Left lung (tissue), 14 donors: ENCODE measurements at regions of chr5 and their contacts with region 1.

Region 1: DNA sequence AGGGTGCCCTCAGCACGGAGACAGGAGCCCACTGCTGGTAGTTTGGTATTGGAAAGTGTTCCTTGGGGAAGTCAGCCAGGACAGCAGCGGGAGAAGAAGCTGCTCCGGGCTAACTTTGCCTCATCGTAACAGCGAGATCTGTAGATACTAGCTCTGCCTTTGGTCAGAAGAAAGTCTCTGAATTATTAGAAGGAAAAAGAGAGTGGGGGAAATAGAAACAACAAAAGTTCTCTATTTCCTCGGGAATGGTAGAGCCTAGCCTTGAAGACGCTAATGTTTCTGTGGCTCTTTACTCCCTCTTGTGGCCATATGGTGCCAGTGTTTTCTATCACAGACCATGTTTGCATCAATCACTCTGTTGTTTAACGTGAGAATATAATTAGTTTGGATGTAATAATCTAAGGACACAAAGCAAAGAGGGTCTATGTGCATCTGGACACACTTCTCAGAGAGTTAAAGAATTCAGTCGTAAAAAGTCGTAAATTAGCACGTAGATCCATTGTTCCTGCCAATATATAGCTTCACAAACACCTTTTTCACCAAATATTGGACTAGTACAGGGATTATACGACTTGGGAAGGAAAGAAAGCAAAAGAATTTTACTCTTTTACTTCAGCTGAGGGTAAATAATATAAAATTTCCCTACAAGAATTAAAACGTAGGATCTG is 40.2 kb upstream of the HSD17B4 start:
- DNase-seq: peak in 3 of 4 donors; percentile 59 to 83 (median 73)
- ATAC-seq: peak; percentile 98
- H3K4me3 ChIP-seq: peak overlapping the region; percentile 33 to 41
- H3K27ac ChIP-seq: peak overlapping the region; percentile 69 to 78
- H3K4me1 ChIP-seq: peaks cover 0 to 29% of the 10 kb centered on the region in 2 donors
- H3K27me3 ChIP-seq: no peaks in the 10 kb centered on the region
- CTCF ChIP-seq: peak; percentile 87 to 89

Region 2: GRCh38 chr5:118989816-118990215 is 422.3 kb before region 1 on chr5:
- intact Hi-C with region 1: loop called in 1 of 2 experiments (anchors 5 kb)
- DNase-seq: no peak
- ATAC-seq: no peak
- H3K4me3 ChIP-seq: no peak overlapping the region
- H3K27ac ChIP-seq: no peak overlapping the region
- H3K4me1 ChIP-seq: peaks cover 3 to 6% of the 10 kb centered on the region in 2 donors
- H3K27me3 ChIP-seq: no peaks in the 10 kb centered on the region
- CTCF ChIP-seq: no peak

Region 3: DNA sequence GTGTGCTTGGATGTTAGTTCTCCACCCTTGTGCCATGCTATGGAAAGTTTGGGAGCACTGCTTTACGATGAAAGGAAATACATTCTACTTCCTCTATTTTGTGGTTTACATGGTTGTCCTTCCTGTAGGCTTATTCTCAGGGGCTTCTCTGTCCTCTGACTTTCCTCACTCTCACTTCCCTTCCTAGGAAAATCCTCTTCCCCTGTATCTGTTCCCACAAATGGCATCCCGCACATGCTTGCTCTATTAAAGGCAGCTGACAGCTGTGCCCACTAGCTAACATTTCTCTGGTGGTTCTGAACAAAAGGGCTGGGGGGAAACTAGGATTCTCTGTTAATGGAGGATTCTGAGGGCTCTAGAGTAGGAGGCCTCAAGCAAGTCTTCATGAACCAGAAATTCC is 269.7 kb after region 1 on chr5:
- intact Hi-C with region 1: no loop called
- DNase-seq: no peak
- ATAC-seq: no peak
- H3K4me3 ChIP-seq: no peak overlapping the region
- H3K27ac ChIP-seq: no peak overlapping the region
- H3K4me1 ChIP-seq: no peaks in the 10 kb centered on the region
- H3K27me3 ChIP-seq: no peaks in the 10 kb centered on the region
- CTCF ChIP-seq: no peak